Thyroid gland (tissue), 4 donors: ENCODE measurements at regions of chr4 and their contacts with region 1.

Region 1: GRCh38 chr4:169757575-169758184 is at the start of gene HPF1:
- DNase-seq: peak; percentile 90 to 92
- H3K4me3 ChIP-seq: peak within 1 kb of the TSS; percentile 13 to 75 (median 56)
- H3K27ac ChIP-seq: peak within 1 kb of the TSS in 2 of 3 donors; percentile 31 to 48
- H3K4me1 ChIP-seq: peaks cover 11 to 12% of the 10 kb centered on the region in 2 donors
- H3K27me3 ChIP-seq: no peaks in the 10 kb centered on the region
- CTCF ChIP-seq: no peak
- POLR2A ChIP-seq: peak in 1 of 2 donors; percentile 71
- total RNA-seq, gene HPF1: 16.2 to 26.5 (median 24.4) TPM

Region 2: DNA sequence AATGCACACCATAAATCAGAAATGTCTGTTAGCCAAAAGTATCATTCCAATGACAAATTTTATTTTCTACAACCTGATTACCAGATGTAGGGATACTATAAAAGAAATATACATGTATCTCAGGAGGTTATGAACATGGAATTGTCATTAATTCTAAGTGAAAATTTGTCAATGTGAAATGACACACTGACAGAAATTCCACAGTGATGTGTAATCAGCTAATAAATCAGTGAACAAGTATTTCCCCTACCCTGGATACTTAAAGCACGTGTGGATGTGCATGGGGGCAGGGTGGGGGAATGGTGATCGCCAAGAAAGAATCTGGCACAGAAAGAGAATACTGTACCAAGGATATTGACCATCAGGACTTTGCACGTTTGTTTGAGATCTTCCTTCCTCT is 610.5 kb before region 1 on chr4:
- intact Hi-C with region 1: no loop called
- DNase-seq: no peak
- H3K4me3 ChIP-seq: no peak overlapping the region
- H3K27ac ChIP-seq: peak overlapping the region in 1 of 3 donors; percentile 8
- H3K4me1 ChIP-seq: peaks cover 16 to 24% of the 10 kb centered on the region in 2 donors
- H3K27me3 ChIP-seq: no peaks in the 10 kb centered on the region
- CTCF ChIP-seq: no peak
- POLR2A ChIP-seq: no peak

Region 3: DNA sequence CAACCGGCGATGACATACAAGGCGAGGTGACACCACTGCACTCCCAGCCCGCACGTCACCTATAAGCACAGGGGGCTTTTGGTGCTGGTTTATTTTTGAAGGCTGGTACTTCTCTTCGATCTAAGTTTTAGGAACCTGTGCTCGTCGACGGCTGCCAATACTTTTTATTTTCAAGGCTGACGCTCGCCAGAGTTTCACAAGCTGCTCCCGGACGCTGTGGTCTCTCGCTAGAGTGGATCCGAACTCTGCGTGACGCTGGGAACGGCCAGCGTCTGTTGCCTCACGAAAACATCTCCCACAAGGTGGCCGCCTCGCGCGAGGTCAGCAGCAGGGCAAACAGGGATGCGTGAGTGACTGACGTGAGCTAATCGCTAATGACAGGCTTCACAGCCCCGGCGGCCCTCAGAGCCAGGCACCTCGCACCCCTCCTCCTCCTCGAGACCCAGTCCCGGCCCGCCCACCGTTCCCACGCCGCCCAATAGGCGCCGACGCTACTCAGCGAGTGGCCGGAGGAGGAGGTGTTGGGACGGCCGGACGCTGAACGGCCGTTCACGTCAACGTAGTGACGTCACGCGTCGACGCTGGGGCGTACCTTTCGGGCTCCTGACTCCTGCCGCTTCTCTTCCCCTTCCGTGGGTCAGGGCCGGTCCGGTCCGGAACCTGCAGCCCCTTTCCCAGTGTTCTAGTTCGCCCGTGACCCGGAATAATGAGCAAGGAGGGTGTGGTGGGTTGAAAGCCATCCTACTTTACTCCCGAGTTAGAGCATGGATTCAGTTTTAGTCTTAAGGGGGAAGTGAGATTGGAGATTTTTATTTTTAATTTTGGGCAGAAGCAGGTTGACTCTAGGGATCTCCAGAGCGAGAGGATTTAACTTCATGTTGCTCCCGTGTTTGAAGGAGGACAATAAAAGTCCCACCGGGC is 137.5 kb before region 1 on chr4 and contains the start of gene CLCN3:
- intact Hi-C with region 1: loop called (anchors 5 kb)
- DNase-seq: peak; percentile 98 to 99
- H3K4me3 ChIP-seq: peak within 1 kb of the TSS; percentile 57 to 99 (median 59)
- H3K27ac ChIP-seq: peak within 1 kb of the TSS; percentile 91 to 97 (median 92)
- H3K4me1 ChIP-seq: peaks cover 9 to 18% of the 10 kb centered on the region in 2 donors
- H3K27me3 ChIP-seq: no peaks in the 10 kb centered on the region
- CTCF ChIP-seq: peak in 1 of 6 experiments; percentile 44
- POLR2A ChIP-seq: peak; percentile 71 to 98
- total RNA-seq, gene CLCN3: 43.3 to 72.4 (median 53.5) TPM